Adrenal gland (tissue), 19 donors: ENCODE measurements at regions of chr10 and their contacts with region 1.

Region 1: GRCh38 chr10:21732067-21732772 is 198.2 kb downstream of the MLLT10 start:
- DNase-seq: peak; percentile 58 to 84 (median 76)
- H3K4me3 ChIP-seq: no peak overlapping the region
- H3K27ac ChIP-seq: no peak overlapping the region
- H3K4me1 ChIP-seq: peaks cover under 1 to 7% of the 10 kb centered on the region in 2 donors
- H3K27me3 ChIP-seq: no peaks in the 10 kb centered on the region
- CTCF ChIP-seq: peak; percentile 76 to 92 (median 87)
- POLR2A ChIP-seq: no peak

Region 2: GRCh38 chr10:21278491-21279239 is 453.6 kb before region 1 on chr10:
- intact Hi-C with region 1: loop called in 1 of 2 experiments (anchors 10 kb)
- DNase-seq: peak; percentile 95 to 99 (median 99)
- H3K4me3 ChIP-seq: no peak overlapping the region
- H3K27ac ChIP-seq: no peak overlapping the region
- H3K4me1 ChIP-seq: peaks cover 0 to 4% of the 10 kb centered on the region in 2 donors
- H3K27me3 ChIP-seq: no peaks in the 10 kb centered on the region
- CTCF ChIP-seq: peak; percentile 87 to 93 (median 90)
- POLR2A ChIP-seq: no peak

Region 3: GRCh38 chr10:21417172-21417712 is 315.0 kb before region 1 on chr10:
- intact Hi-C with region 1: no loop called
- DNase-seq: no peak
- H3K4me3 ChIP-seq: no peak overlapping the region
- H3K27ac ChIP-seq: no peak overlapping the region
- H3K4me1 ChIP-seq: no peaks in the 10 kb centered on the region
- H3K27me3 ChIP-seq: no peaks in the 10 kb centered on the region
- CTCF ChIP-seq: no peak
- POLR2A ChIP-seq: no peak

Region 4: GRCh38 chr10:21516242-21517131 is 215.7 kb before region 1 on chr10:
- intact Hi-C with region 1: loop called in 1 of 2 experiments (anchors 5 kb)
- DNase-seq: peak; percentile 68 to 86 (median 75)
- H3K4me3 ChIP-seq: peak overlapping the region in 2 of 4 donors; percentile 40 to 70
- H3K27ac ChIP-seq: peak overlapping the region in 4 of 5 donors; percentile 79 to 90 (median 87)
- H3K4me1 ChIP-seq: peaks cover 15 to 22% of the 10 kb centered on the region in 2 donors
- H3K27me3 ChIP-seq: no peaks in the 10 kb centered on the region
- CTCF ChIP-seq: no peak
- POLR2A ChIP-seq: peak in 1 of 2 donors; percentile 62

Region 5: DNA sequence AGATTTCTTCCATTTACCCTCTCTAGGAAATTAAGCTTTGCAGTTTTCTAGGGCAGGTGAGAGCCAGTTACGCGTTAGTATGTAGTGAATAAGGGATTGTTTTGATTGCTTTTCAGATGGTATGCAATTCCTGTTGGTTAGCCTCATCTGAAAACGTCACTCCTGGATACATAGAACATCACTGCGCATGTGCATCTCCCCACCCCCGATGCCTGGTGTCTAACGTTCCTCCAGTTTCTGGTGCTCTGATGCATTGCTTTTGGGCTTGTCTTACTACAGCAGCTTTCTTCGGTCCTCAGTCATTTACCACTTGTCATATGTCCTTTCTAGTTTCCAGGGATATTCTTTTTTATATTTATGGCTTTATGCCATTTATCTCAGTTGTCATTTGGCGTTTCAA is 175.7 kb before region 1 on chr10:
- intact Hi-C with region 1: no loop called
- DNase-seq: peak in 1 of 7 donors; percentile 45
- H3K4me3 ChIP-seq: no peak overlapping the region
- H3K27ac ChIP-seq: no peak overlapping the region
- H3K4me1 ChIP-seq: peaks cover 4 to 11% of the 10 kb centered on the region in 2 donors
- H3K27me3 ChIP-seq: no peaks in the 10 kb centered on the region
- CTCF ChIP-seq: no peak
- POLR2A ChIP-seq: no peak